Activated CD8-positive, alpha-beta memory T cell treated with anti-CD3 and anti-CD28 coated beads, Interleukin-2, amount 10 ng/mL, durations not matched to agents 7 days and 5 days (primary cell): ENCODE measurements at regions of chr3 and their contacts with region 1.

Region 1: DNA sequence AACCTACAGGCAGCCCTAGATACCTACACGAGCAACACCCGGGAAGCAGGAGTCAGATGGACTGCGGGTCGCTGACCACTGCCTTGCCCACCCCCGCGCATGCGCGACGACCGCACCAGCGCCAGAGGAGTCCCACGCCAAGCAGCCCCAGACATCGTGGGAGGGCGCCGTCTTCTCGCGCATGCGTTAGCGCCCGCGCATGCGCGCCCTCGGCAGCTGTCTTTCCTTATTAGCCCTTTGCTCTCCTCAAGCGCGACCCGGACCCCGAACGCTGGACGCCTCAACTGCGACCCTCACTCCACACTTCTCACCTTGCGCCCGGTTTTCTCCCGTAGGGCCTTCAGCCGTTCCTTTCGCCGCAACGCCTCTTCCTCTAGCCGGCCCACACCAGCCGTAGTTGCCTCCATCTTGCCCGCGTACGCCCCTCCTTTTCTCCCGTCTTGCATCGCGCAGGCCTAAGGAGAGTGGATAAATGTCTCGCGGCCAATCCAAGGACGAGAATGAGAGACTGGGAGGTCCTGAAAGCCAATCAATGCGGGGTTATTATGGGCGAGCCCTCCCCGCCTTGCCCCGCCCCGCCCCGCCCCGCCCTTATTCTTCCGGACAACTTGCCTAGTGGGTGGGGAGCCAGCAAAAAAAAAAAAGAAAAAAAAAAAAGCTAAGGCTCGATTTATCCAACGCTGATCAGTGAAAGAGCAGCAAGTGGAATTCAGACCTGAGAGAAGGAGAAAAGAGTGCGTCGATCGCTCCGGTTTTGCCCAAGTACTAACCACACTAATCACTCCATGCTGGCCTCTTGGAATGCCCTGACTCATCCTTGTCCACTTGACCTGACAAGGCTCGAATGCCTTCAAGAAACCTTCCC is at the start of gene CCDC12:
- DNase-seq: peak; percentile 98
- ATAC-seq: peak; percentile 84
- H3K4me3 Mint-ChIP-seq: peak within 1 kb of the TSS; percentile 98
- H3K27ac Mint-ChIP-seq: peak within 1 kb of the TSS; percentile 96
- H3K4me1 Mint-ChIP-seq: peaks cover 64% of the 10 kb centered on the region
- H3K27me3 Mint-ChIP-seq: no peaks in the 10 kb centered on the region
- total RNA-seq, gene CCDC12: 65.9 to 72.7 TPM

Region 2: DNA sequence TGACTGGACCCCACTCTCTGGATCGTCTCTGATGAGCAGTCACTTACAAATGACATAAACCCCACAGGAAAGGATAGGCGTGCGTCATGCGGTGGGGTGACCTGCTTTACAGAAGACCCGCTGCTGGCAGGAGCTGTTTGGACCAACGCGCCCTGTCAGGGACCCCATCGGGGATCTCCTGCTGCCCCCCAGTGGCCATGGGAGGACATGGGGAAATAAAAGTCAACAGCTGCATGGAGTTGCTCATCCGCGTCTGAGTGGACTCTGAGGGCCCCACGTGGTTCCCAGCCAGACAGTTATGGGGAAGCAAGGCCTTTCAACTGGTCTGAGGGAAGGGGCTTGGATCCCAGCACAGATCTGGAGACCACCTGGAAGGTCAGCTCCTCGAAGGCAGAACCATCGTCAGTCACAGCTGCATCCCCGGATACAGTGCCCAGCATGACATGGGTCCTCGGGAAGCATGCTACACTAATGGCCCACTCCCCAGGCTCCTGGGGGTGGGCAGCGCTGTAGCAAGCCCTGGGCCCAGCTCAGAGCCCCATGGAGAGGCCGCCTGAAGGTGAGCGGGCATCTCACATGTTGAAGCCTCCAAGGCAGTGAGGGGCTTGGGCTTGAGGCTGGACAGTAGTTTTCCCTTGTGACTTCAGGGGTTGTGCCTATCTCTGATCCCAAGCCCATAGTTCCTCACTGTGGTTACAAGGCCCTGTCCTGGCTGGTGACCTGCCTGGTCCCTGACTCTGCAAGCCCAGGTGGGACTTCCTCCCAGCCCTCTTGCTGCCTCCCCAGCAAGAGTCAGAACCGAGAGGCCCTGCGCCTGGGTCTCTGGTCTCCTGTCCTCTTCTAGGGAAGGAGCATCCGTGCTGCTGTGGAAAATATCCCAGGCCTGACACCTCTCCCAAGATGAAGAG is 66.8 kb before region 1 on chr3:
- CTCF ChIA-PET with region 1: interaction called, 11 read pairs
- DNase-seq: peak; percentile 89
- ATAC-seq: peak; percentile 84
- H3K4me3 Mint-ChIP-seq: no peak overlapping the region
- H3K27ac Mint-ChIP-seq: no peak overlapping the region
- H3K4me1 Mint-ChIP-seq: peaks cover 24% of the 10 kb centered on the region
- H3K27me3 Mint-ChIP-seq: no peaks in the 10 kb centered on the region

Region 3: GRCh38 chr3:46947981-46948791 is 28.4 kb before region 1 on chr3:
- CTCF ChIA-PET with region 1: interaction called, 11 read pairs
- DNase-seq: peak; percentile 88
- ATAC-seq: peak; percentile 79
- H3K4me3 Mint-ChIP-seq: peak overlapping the region; percentile 66
- H3K27ac Mint-ChIP-seq: peak overlapping the region; percentile 97
- H3K4me1 Mint-ChIP-seq: peaks cover 76% of the 10 kb centered on the region
- H3K27me3 Mint-ChIP-seq: no peaks in the 10 kb centered on the region